Sigmoid colon (tissue), 7 donors: ENCODE measurements at regions of chr12 and their contacts with region 1.

Region 1: DNA sequence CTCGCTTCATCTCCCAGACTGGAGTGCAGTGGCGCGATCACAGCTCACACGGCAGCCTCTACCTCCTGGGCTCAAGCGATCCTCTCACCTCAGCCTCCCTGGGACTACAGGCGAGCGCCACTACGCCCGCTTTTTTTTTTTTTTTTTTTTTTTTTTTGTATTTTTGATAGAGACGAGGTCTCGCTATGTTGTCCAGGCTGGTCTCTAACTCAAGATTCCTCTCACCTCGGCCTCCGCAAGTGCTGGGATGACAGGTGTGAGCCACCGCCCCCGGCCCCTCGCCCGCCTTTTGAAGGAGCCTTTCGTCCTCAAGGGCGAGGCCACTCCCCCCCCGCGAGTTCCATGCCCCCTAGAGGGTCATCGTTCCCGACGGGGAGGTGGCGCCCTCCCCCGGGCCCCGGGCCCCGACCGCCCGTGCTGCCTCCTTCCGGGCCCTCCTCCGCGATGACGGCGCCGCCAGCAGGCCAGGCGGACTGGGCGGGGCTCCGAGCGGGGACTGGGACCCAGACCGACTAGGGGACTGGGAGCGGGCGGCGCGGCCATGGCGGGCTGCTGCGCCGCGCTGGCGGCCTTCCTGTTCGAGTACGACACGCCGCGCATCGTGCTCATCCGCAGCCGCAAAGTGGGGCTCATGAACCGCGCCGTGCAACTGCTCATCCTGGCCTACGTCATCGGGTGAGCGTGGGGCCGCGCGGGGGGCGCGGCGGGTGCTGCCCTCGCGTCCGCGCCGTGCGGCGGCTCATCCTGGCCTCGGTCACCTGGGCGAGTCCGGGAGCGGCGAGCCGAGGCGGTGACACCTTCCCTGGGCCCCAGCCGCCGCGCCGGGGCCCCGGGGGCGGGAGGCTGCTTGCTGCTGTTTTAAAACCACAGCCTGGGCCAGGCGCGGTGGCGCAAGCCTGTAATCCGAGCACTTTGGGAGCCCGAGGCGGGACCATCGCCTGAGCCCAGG is at the start of gene P2RX4:
- DNase-seq: peak; percentile 94
- H3K4me3 ChIP-seq: peak within 1 kb of the TSS; percentile 62 to 73 (median 68)
- H3K27ac ChIP-seq: peak within 1 kb of the TSS; percentile 89 to 91 (median 90)
- H3K4me1 ChIP-seq: peaks cover 0 to 21% (median 15%) of the 10 kb centered on the region in 4 donors
- H3K27me3 ChIP-seq: no peaks in the 10 kb centered on the region
- CTCF ChIP-seq: no peak
- EP300 ChIP-seq: no peak
- POLR2A ChIP-seq: peak; percentile 65 to 67
- total RNA-seq, gene P2RX4: 26.0 to 36.9 (median 33.6) TPM

Region 2: GRCh38 chr12:121132601-121133481 is 77.1 kb before region 1 on chr12 and contains the start of gene P2RX7:
- intact Hi-C with region 1: loop called (anchors 2 kb)
- DNase-seq: peak; percentile 91
- H3K4me3 ChIP-seq: peak within 1 kb of the TSS; percentile 38 to 61 (median 52)
- H3K27ac ChIP-seq: peak within 1 kb of the TSS; percentile 74 to 87 (median 79)
- H3K4me1 ChIP-seq: peaks cover 0 to 38% (median 28%) of the 10 kb centered on the region in 4 donors
- H3K27me3 ChIP-seq: no peaks in the 10 kb centered on the region
- CTCF ChIP-seq: no peak
- EP300 ChIP-seq: no peak
- POLR2A ChIP-seq: no peak
- total RNA-seq, gene P2RX7: 3.9 to 8.0 (median 5.0) TPM

Region 3: GRCh38 chr12:121296618-121297434 is 86.9 kb after region 1 on chr12 and contains the start of gene CAMKK2:
- intact Hi-C with region 1: loop called (anchors 10 kb)
- DNase-seq: peak; percentile 89
- H3K4me3 ChIP-seq: peak within 1 kb of the TSS; percentile 84 to 97 (median 92)
- H3K27ac ChIP-seq: peak within 1 kb of the TSS; percentile 85 to 90 (median 88)
- H3K4me1 ChIP-seq: peaks cover 0 to 34% (median 31%) of the 10 kb centered on the region in 4 donors
- H3K27me3 ChIP-seq: no peaks in the 10 kb centered on the region
- CTCF ChIP-seq: no peak
- EP300 ChIP-seq: no peak
- POLR2A ChIP-seq: no peak
- total RNA-seq, gene CAMKK2: 21.6 to 33.8 (median 27.3) TPM